ENCODE measurements at regions of chr20 and their contacts with region 1.

Region 1: DNA sequence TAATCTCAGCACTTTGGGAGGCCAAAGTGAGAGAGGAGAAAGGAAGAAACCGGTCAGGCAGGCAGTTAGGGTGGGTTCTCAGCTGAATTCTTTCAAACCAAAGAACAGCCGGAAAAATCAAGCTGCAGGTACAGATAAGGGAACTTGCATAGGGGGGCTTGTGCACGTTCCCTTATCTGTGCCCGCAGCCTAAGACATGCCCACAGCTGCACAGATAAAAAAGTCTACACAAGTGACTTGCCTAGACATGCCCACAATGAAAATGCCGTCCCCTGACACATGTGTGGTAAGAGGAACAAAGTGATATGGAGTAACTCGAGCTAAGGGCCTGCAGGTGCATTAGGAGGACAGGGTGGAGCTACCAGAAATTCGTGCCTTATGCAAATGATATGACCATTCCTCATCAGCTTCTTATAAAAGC is 175.8 kb upstream of the SALL4 start:
- DNase-seq: no peak
- H3K4me3 ChIP-seq: no peak overlapping the region
- CTCF ChIP-seq: no peak
- POLR2A ChIP-seq: no peak

Region 2: GRCh38 chr20:51335329-51335841 is 642.7 kb before region 1 on chr20:
- intact Hi-C with region 1: no loop called
- DNase-seq: no peak
- H3K4me3 ChIP-seq: no peak overlapping the region
- CTCF ChIP-seq: no peak
- POLR2A ChIP-seq: no peak

Region 3: GRCh38 chr20:51961928-51962761 is 15.9 kb before region 1 on chr20:
- intact Hi-C with region 1: loop called (anchors 1 kb)
- DNase-seq: peak in 1 of 2 donors; percentile 25
- H3K4me3 ChIP-seq: no peak overlapping the region
- CTCF ChIP-seq: no peak
- POLR2A ChIP-seq: no peak

Region 4: GRCh38 chr20:52047811-52048764 is 70.0 kb after region 1 on chr20:
- intact Hi-C with region 1: no loop called
- DNase-seq: no peak
- H3K4me3 ChIP-seq: no peak overlapping the region
- CTCF ChIP-seq: no peak
- POLR2A ChIP-seq: no peak

Region 5: DNA sequence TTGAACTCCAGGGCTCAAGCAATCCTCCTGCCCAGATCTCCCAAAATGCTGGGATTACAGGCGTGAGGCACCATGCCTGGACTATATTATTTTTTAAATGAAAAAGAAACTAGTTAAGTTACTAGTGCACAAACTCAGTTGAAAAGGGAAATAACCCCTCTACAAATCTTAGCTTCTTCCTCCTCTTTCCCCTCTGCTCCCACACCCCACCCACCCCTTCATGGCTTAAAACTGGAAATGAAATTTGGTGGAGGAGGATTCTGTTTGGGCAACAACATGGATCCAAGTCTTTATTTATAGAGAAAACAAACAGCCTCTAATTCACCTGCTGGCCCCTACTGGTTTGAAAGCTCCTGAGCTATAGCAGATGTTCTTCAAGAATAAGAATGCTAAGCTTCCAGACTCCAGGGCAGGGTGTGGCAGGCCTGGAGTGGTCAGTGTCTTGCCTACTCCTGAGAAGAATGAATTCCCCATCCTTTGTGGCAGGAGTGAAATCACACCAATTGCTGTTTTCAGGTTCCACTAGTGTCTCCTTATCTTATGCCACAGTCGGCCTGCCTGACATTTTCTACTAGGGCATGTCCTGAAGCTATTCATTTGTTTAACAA is 140.0 kb after region 1 on chr20:
- intact Hi-C with region 1: no loop called
- DNase-seq: no peak
- H3K4me3 ChIP-seq: no peak overlapping the region
- CTCF ChIP-seq: no peak
- POLR2A ChIP-seq: no peak